Naive thymus-derived CD4-positive, alpha-beta T cell (primary cell): ENCODE measurements at regions of chr2 and their contacts with region 1.

Region 1: DNA sequence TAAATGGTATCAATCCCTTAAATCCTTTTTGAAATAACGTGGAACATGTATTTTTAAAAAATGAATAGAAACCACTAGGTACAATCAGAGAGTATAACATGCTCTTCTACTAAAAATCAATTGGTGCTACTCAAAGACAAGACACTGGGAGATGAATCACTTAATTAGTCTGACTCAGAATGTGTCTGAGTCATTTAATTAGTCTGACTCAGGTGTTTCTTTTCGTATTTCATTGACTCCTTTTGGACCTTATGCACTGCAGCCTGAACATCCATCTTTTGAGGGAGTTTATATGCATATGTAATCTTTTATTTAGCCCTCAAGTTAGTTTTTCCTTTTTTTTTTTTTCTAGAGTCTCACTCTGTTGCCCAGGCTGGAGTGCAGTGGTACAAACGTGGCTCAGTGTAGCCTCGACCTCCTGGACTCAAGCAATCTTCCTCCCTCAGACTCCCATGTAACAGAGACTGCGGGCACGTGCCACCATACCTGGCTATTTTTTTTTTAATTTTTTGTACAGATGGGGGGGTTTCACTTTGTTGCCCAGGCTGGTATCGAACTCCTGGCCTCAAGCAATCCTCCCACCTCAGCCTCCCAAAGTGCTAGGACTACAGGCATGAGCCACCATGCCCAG is 26.5 kb downstream of the PPP4R3B start:
- DNase-seq: no peak
- ATAC-seq: no peak
- H3K4me3 ChIP-seq: no peak overlapping the region
- H3K4me3 Mint-ChIP-seq: no peak overlapping the region
- H3K27ac ChIP-seq: no peak overlapping the region
- H3K27ac Mint-ChIP-seq: peak overlapping the region in 3 of 9 donors; percentile 31 to 48 (median 41)
- H3K4me1 ChIP-seq: no peaks in the 10 kb centered on the region
- H3K4me1 Mint-ChIP-seq: peaks cover 7 to 55% (median 46%) of the 10 kb centered on the region in 7 donors
- H3K27me3 ChIP-seq: no peaks in the 10 kb centered on the region
- H3K27me3 Mint-ChIP-seq: no peaks in the 10 kb centered on the region

Region 2: DNA sequence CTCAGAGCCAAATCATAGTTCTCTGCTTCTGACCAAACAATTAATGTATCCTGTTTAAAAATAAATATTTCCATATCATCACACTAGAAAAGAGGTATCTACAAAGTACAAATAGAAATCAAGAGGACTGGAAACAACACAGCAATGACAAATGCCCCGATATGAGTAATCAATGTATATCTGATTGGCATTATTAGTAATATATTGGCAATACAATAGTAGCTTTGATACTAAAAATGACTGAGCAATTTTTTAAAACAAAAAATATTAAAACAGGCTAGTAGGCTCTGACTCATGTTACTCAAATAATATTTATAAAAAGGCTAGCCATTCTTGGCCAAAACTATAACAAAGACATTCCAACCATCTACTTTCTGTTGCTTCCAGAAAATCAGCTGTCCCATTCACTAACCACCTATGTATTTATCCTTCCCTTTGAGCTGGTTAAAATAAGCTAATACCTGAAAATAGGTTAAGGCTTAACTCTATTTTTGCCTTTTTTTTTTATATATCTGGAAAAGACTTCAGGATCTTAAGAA is 13.2 kb after region 1 on chr2:
- CTCF ChIA-PET with region 1: no interaction called
- POLR2A ChIA-PET with region 1: interaction called, 3 read pairs
- intact Hi-C with region 1: loop called in 1 of 2 experiments (anchors 1 kb)
- DNase-seq: no peak
- ATAC-seq: no peak
- H3K4me3 ChIP-seq: no peak overlapping the region
- H3K4me3 Mint-ChIP-seq: peak overlapping the region in 3 of 10 donors; percentile 23 to 47 (median 33)
- H3K27ac ChIP-seq: no peak overlapping the region
- H3K27ac Mint-ChIP-seq: peak overlapping the region in 7 of 9 donors; percentile 28 to 88 (median 55)
- H3K4me1 ChIP-seq: peaks cover 16 to 19% of the 10 kb centered on the region in 2 donors
- H3K4me1 Mint-ChIP-seq: peaks cover 27 to 80% (median 69%) of the 10 kb centered on the region in 7 donors
- H3K27me3 ChIP-seq: no peaks in the 10 kb centered on the region
- H3K27me3 Mint-ChIP-seq: no peaks in the 10 kb centered on the region

Region 3: GRCh38 chr2:55609938-55610578 is 19.1 kb after region 1 on chr2:
- CTCF ChIA-PET with region 1: interaction called, 3 read pairs
- POLR2A ChIA-PET with region 1: no interaction called
- intact Hi-C with region 1: loop called in 1 of 2 experiments (anchors 2 kb)
- DNase-seq: no peak
- ATAC-seq: no peak
- H3K4me3 ChIP-seq: no peak overlapping the region
- H3K4me3 Mint-ChIP-seq: peak overlapping the region in 8 of 10 donors; percentile 25 to 59 (median 42)
- H3K27ac ChIP-seq: peak overlapping the region; percentile 11
- H3K27ac Mint-ChIP-seq: peak overlapping the region in 8 of 9 donors; percentile 14 to 78 (median 54)
- H3K4me1 ChIP-seq: peaks cover 10 to 18% of the 10 kb centered on the region in 2 donors
- H3K4me1 Mint-ChIP-seq: peaks cover 32 to 80% (median 73%) of the 10 kb centered on the region in 7 donors
- H3K27me3 ChIP-seq: no peaks in the 10 kb centered on the region
- H3K27me3 Mint-ChIP-seq: no peaks in the 10 kb centered on the region

Region 4: DNA sequence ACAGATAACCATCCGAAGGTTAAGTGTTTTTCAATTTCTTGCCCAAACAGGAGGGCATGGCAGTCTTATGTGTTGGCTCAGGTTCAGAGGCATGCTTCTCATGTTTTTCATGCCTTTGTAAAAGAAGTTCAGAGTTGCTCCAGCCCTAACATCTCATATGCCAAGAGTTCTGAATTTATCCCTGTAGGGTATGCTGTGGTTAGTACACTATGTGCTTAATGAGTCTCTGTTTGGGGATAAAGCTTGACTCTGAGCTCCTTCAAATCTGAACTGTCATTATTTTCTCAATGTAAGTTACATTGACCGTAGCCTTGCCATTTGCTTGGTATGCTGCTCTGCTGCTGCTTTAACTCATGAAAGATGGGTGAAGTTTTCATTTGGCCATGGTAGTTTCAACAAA is 170.6 kb after region 1 on chr2:
- CTCF ChIA-PET with region 1: no interaction called
- POLR2A ChIA-PET with region 1: no interaction called
- intact Hi-C with region 1: no loop called
- DNase-seq: no peak
- ATAC-seq: no peak
- H3K4me3 ChIP-seq: no peak overlapping the region
- H3K4me3 Mint-ChIP-seq: no peak overlapping the region
- H3K27ac ChIP-seq: no peak overlapping the region
- H3K27ac Mint-ChIP-seq: no peak overlapping the region
- H3K4me1 ChIP-seq: no peaks in the 10 kb centered on the region
- H3K4me1 Mint-ChIP-seq: no peaks in the 10 kb centered on the region
- H3K27me3 ChIP-seq: no peaks in the 10 kb centered on the region
- H3K27me3 Mint-ChIP-seq: peaks cover 5 to 40% (median 32%) of the 10 kb centered on the region in 5 donors